ENCODE measurements at regions of chr3 and their contacts with region 1.

Region 1: DNA sequence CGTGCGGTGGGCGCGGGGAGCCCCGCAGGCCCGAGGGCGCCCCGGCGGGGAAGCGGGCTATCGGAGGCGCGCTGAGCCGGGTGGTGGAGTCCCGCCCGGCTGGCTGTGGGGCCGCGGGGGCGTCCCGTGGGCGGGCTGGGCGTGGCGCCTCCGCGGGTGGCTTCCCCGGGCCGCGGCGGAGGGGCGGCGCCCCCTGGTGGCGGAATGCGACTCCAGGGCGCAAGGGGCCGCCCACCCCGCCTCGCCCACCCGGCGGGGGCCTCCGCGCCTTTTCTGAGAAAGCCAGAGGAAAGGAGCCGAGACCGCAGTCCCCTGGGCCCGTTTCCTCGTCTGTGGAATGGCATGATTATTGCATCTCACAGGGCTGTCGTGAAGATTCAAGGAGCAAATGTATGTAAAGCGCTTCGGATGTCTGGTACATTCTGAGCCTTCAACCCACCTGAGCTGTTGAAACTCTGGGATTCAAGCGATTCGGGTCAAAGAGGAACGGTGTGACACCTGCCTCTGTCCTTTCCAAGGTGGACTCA is 31.9 kb upstream of the RAB6B start:
- DNase-seq: no peak
- H3K4me3 ChIP-seq: no peak overlapping the region
- H3K27ac ChIP-seq: no peak overlapping the region
- H3K4me1 ChIP-seq: no peaks in the 10 kb centered on the region
- H3K27me3 ChIP-seq: 0 out of 2 replicates have a peak, but pooled peaks cover 5% of the 10 kb centered on the region
- CTCF ChIP-seq: no peak

Region 2: GRCh38 chr3:132730891-132731580 is 1196.6 kb before region 1 on chr3:
- CTCF ChIA-PET with region 1: no interaction called
- POLR2A ChIA-PET with region 1: no interaction called
- intact Hi-C with region 1: loop called (anchors 10 kb)
- DNase-seq: peak in 1 of 2 experiments; percentile 25
- H3K4me3 ChIP-seq: no peak overlapping the region
- H3K27ac ChIP-seq: no peak overlapping the region
- H3K4me1 ChIP-seq: no peaks in the 10 kb centered on the region
- H3K27me3 ChIP-seq: no peaks in the 10 kb centered on the region
- CTCF ChIP-seq: peak; percentile 51; the same call in 1 of the 2 replicates

Region 3: DNA sequence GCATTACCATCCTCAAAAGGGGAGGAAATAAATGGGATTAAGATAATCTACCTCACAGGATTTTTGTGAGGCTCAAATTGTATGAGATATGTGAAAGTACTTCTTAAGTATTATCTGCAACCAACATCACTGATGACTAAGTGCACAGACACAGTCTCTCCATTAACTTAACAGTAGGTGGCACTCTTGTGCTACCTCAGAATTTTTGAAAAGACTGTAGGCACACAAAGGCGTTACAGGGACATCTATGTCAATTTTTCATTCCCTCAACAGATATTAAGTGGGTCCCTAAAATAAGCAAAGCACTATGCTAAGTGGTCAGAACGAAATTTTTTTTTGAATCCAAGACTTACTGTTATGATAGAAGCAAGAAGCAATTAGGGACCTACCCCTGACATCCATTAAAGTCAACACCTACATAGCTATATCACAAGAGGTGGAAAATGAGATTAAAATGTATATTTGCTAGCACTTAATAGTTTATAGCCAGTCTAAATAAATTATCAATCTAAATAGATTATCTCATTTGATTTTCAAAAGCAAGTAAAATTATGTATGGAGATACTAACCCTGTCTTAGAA is 270.2 kb after region 1 on chr3:
- CTCF ChIA-PET with region 1: no interaction called
- POLR2A ChIA-PET with region 1: no interaction called
- intact Hi-C with region 1: loop called (anchors 5 kb)
- DNase-seq: peak; percentile 18 to 51
- H3K4me3 ChIP-seq: no peak overlapping the region
- H3K27ac ChIP-seq: no peak overlapping the region
- H3K4me1 ChIP-seq: peaks cover 22% of the 10 kb centered on the region
- H3K27me3 ChIP-seq: no peaks in the 10 kb centered on the region
- CTCF ChIP-seq: peak; percentile 81

Region 4: DNA sequence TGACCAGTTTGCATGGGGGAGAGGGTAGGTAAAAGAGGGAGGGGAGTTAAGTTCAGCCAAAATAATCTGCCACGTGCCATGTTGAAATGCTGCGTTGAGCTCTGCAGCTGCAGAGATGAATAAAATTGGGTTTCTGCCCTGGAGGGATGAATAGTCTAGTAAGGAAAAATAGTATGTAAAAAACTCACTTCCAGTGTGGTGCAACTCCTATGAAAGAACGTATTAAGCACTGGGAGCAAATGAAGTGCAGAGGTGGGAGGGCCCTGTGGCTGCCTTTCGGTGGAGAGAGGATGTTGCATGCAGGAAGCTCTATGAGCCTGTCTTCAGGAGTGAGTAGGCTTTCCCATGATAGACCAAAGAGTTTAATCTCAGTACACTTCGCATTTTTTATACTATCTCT is 566.9 kb after region 1 on chr3:
- CTCF ChIA-PET with region 1: no interaction called
- POLR2A ChIA-PET with region 1: no interaction called
- intact Hi-C with region 1: loop called (anchors 5 kb)
- DNase-seq: no peak
- H3K4me3 ChIP-seq: no peak overlapping the region
- H3K27ac ChIP-seq: no peak overlapping the region
- H3K4me1 ChIP-seq: no peaks in the 10 kb centered on the region
- H3K27me3 ChIP-seq: no peaks in the 10 kb centered on the region
- CTCF ChIP-seq: no peak

Measured in PC-9 (cell line).